ENCODE measurements at regions of chr3 and their contacts with region 1.

Region 1: DNA sequence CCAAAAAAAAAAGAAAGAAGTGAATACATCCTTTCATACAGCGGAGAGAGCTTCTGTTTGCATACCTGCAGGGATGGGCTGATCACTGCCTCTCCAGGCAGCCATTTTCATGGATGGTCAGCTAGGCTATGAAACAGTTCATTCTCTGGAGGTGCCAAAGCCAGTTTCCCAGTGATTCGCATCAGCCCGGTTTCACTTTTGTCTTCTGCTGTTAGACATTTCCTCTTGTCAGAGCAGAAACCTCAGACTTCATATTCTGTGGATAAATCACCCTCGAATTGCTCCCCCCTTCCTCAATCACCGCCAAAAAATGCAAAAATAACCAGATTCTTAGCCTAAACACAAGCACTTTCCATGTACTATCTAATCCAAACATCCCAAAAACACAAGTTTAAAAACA is 225.6 kb downstream of the ADAMTS9 start:
- DNase-seq: no peak
- CTCF ChIP-seq: no peak

Region 2: DNA sequence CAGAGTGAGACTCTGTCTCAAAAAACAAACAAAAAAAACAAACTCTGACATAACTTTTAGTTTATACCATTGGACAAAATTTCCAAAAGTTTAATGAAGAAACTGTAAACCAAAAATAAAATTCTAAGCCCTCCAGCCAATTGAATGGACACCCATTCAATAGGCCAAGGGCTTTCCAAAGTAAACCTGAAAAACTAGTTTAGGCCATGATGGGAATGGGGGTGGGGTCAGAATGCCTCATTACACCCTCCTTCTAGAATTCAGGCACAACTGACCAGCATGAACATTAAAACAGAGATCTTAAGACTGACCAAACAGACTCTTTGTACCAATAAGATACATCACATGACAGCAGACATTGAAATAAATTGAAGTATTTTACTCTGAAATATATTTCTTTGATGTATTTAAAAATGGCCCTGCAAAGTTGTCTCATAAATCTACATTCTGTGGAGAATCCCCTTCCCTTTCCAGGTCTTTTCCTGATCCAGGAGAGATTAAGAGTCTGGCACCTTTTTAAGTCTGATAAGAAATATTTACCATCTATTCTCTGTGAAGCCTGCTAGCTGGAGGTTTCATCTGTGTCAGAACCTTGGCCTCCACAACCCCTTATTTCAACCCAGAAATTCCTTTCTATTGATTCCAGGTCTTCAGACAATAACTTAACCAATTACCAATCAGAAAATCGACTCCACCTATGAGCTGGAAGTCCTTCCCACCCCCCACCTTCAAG is 614.3 kb before region 1 on chr3:
- in situ Hi-C with region 1: loop called (anchors 25 kb)
- DNase-seq: no peak
- CTCF ChIP-seq: no peak

Region 3: DNA sequence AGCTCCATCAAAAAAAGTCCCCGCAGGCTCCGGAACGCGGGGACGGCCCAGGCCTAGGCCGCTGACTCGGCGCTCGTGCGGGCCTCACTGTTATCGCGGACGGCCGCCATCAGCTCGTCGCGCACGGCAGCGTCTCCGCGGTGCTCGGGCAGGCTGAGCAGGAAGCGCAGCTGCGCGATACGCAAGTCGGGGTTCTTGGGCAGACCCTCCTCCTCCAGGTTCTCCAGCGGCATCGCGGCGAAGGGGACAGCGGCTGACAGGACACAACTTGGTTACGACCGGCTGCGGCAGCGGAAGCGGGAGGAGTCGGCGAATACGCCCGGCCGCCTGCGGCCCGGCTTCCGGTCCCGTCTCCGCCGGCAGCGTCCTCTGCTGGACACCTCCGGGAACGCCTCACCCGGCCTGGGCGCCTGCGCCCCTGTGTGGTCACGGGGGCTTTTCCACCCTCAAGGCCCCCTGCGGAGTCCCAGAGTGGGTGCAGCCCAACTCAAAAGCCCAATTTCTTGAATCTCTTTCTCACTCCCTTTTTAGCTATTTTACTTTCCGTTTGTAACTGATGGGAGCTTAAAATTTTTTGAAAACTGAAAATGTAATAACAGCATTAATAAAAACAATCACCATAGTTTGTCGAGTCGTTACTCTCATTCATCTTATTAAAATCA is 438.9 kb before region 1 on chr3 and contains the start of gene PSMD6:
- in situ Hi-C with region 1: loop called (anchors 10 kb)
- DNase-seq: peak; percentile 92
- CTCF ChIP-seq: peak; percentile 100

Region 4: DNA sequence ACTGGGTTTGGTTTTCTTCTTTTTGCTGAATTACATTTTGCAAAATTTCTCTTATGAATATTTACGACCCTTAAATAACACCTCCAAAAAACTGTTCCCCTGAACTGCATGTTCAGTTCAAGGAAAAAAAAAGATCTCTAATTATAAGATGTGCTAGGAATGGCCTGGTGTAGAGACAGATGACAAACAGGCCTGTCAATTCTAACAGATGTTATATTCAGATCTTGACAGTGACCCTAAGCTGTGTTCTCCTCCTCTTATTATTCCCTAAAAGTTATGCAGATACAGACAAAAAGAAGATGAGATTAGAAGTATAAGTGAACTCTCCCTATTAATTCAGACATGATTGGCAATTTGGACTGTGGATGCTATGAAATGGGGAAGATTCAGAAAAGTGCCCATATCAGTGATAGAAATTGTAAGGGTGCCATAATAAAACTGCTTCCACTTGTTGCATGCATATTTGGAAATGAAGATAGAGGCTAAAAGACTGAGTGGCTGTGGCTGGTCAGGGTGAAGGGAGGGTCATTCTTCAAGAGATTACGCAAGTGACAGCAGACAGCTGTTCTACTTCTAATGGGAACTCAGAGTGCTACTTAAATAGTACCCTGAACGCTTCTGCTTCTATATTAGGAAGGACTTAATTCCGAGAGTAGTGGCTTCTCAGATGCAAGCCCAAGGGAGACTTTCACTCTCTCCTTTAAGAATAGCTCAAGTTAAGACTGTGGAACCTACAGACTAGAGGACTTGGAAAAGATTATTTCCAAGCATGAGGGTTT is 150.1 kb after region 1 on chr3:
- in situ Hi-C with region 1: no loop called
- DNase-seq: no peak
- CTCF ChIP-seq: no peak

Measured in GM13976 (cell line).